ENCODE measurements at regions of chr15 and their contacts with region 1.

Region 1: GRCh38 chr15:84658080-84658787 is at the start of gene NMB:
- DNase-seq: peak; percentile 90
- total RNA-seq, gene NMB: 2.6 TPM

Region 2: DNA sequence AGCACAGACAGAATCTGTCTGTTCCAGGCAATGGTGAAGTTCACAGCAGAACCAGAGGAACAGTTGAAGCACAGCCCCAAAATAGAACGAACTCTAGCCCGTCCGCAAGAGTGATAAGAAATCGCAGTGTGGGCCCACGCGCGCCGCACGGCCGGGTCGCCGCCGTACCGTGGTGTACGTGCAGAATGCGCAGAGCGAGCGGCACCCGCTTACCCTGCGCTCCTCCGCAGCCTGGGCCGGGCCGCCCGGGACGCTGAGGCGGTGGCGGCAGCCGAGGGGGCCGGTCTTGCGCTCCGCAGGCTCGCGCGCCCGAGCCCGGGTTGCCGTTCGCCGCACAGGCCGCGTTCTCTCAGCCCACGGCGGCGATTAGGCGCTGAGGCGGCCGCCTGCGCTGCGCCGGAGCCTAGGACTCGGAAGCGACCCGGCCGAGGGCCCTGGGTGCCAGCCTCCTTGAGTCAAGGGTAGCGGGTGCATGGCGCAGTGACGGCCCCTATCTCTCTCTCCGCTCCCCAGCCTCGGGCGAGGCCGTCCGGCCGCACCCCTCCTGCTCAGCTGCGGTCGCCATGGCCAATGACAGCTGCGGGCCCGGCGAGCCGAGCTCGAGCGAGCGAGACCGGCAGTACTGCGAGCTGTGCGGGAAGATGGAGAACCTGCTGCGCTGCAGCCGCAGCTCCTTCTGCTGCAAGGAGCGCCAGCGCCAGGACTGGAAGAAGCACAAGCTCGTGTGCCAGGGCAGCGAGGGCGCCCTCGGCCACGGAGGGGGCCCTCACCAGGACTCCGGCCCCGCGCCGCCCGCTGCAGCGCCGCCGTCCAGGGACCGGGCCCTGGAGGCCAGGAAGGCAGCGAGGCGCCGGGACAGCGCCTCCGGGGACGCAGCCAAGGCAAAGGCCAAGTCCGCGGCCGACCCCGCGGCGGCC is 24.7 kb before region 1 on chr15:
- intact Hi-C with region 1: loop called (anchors 2 kb)
- DNase-seq: peak; percentile 86

Region 3: GRCh38 chr15:84748274-84749110 is 90.3 kb after region 1 on chr15 and contains the start of gene ZNF592:
- intact Hi-C with region 1: loop called (anchors 5 kb)
- DNase-seq: peak; percentile 94
- total RNA-seq, gene ZNF592: 25.7 TPM

Region 4: DNA sequence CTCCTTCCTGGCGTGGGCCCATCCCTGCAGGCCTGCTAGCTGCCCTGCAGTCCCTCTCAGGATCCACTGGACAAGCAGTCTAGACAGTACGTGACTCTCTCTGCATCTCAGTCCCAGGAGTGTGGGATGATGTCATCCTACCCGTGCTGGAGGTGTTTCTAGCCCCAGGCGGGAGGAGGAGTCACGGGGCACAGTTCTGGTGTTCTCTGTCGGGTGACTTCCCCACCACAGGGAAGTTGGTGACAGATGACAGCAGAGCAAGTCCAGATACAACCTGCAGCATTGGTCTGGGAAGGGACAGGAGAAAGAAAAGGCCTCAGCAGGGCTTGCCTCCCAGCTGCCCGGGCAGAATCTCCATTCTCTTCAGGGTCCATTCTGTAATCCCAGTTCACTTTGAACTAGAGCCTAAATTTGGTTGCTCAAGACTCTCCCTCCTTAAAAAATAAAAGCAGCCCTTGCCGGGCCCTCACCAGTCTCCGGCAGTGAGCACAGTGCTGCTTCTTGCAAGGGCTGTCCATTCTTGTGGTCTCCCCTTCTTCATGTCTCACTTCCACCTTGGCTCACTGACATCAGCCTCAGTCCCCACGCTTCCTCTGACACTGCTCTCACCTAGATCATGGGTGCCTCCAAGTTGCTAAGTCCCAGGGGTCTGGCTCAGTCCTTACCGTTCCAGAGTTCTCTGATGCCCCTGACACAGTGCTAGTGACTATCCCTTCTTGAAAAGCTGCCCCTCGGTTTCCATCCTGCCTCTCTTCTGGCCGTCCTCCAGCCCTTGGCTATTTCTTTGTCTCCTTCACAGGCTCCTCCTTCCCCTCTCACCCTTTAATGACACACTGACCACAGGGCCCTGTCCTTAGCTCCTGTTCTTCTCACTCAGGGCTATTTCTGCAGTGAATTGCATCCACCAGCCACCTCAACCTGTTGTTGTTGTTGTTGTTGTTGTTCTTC is 257.1 kb after region 1 on chr15:
- intact Hi-C with region 1: loop called (anchors 5 kb)
- DNase-seq: peak; percentile 94

Region 5: GRCh38 chr15:84962969-84963368 is 304.7 kb after region 1 on chr15:
- intact Hi-C with region 1: no loop called
- DNase-seq: peak; percentile 31

Measured in cardiac septum (tissue), 1 donor.